ENCODE measurements at regions of chr7 and their contacts with region 1.

Region 1: DNA sequence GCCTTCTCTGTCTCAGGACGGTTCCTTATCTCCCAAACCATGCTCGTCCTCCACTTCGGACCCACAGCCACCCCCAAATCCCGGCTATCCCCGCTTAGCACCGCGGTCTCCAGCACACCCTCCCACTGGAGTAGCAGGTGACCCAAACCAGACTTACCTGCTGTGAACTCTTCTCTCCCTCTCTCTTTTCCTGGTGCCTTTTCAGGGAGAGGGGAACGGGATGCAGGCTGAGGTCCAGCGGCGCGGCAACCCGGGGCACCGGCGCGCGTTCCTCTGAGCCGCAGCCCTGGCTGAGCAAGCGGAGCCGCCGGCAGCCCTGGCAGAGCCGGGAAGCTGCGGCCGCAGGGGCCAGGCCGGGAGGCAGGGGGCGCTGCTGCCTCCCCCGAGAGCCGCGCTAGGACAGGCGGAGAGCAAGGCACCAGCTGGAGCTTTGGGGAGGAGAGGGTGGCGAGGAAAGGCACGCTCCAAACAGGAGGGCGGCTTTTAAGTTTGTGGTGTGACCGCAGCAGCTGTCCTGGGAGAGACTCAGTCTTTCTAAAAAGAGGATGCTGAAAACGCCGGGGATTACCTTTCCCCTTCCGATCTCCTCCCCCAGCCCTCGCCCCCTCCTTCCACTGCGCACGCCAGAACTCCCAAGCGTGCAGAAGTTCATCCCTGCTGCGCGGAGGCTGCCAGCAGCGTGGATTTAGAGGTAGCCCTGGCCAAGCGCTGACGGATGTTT is at the start of gene SEMA3D:
- DNase-seq: peak; percentile 48 to 85 (median 67)
- H3K4me3 ChIP-seq: peak within 1 kb of the TSS; percentile 8
- H3K27ac ChIP-seq: peak within 1 kb of the TSS in 1 of 2 donors; percentile 51
- H3K4me1 ChIP-seq: peaks cover 1% of the 10 kb centered on the region
- H3K27me3 ChIP-seq: no peaks in the 10 kb centered on the region
- CTCF ChIP-seq: peak in 2 of 3 donors; percentile 44 to 66
- EP300 ChIP-seq: no peak
- POLR2A ChIP-seq: no peak
- total RNA-seq, gene SEMA3D: 0.95 to 6.1 (median 3.0) TPM

Region 2: GRCh38 chr7:84161398-84161797 is 1025.3 kb before region 1 on chr7:
- intact Hi-C with region 1: no loop called
- DNase-seq: no peak
- H3K4me3 ChIP-seq: no peak overlapping the region
- H3K27ac ChIP-seq: no peak overlapping the region
- H3K4me1 ChIP-seq: no peaks in the 10 kb centered on the region
- H3K27me3 ChIP-seq: no peaks in the 10 kb centered on the region
- CTCF ChIP-seq: no peak
- EP300 ChIP-seq: no peak
- POLR2A ChIP-seq: no peak

Region 3: GRCh38 chr7:85041605-85042216 is 145.0 kb before region 1 on chr7:
- intact Hi-C with region 1: loop called in 2 of 4 experiments (anchors 5 to 10 kb)
- DNase-seq: peak; percentile 42 to 75 (median 48)
- H3K4me3 ChIP-seq: no peak overlapping the region
- H3K27ac ChIP-seq: no peak overlapping the region
- H3K4me1 ChIP-seq: no peaks in the 10 kb centered on the region
- H3K27me3 ChIP-seq: no peaks in the 10 kb centered on the region
- CTCF ChIP-seq: peak in 2 of 3 donors; percentile 51 to 58
- EP300 ChIP-seq: no peak
- POLR2A ChIP-seq: no peak

Region 4: GRCh38 chr7:85070967-85071628 is 115.6 kb before region 1 on chr7:
- intact Hi-C with region 1: loop called in 1 of 4 experiments (anchors 10 kb)
- DNase-seq: no peak
- H3K4me3 ChIP-seq: no peak overlapping the region
- H3K27ac ChIP-seq: no peak overlapping the region
- H3K4me1 ChIP-seq: no peaks in the 10 kb centered on the region
- H3K27me3 ChIP-seq: no peaks in the 10 kb centered on the region
- CTCF ChIP-seq: no peak
- EP300 ChIP-seq: no peak
- POLR2A ChIP-seq: no peak